Activated B cell treated with CpG ODN at 0.5 μM for 24 hours (primary cell): ENCODE measurements at regions of chr1 and their contacts with region 1.

Region 1: DNA sequence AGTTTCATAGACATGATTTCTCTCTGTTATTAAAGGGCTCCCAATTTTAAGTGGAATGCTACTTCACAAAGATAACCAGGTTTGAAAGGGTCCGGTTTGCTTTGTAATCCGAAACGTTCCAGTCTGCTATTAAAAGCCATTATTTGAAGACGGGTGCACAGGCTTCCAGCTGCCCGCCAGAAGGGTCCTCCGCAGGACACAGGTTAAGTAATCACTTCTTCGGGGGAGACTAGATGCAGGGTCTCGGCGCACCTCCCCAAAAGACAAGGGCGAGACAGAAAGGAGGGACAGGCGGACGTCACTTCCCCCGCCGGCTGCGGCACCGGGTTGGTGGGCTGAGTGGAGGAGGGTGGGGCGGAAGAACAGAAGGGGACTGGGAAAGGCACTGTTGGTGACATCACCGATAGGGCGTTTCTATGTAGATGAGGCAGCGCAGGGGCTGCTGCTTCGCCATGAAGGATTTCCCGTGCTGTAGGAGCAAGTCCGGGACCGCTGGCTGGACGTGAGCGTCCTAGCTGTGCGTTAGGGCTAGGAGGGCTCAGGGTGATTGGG is 8.9 kb downstream of the RNU1-2 start:
- DNase-seq: peak; percentile 86
- ATAC-seq: peak; percentile 90
- H3K4me3 Mint-ChIP-seq: no peak overlapping the region
- H3K27ac Mint-ChIP-seq: no peak overlapping the region
- H3K4me1 Mint-ChIP-seq: peaks cover 40% of the 10 kb centered on the region
- H3K27me3 Mint-ChIP-seq: no peaks in the 10 kb centered on the region
- CTCF ChIP-seq: no peak

Region 2: GRCh38 chr1:16888860-16889816 is 15.5 kb before region 1 on chr1:
- CTCF ChIA-PET with region 1: no interaction called
- POLR2A ChIA-PET with region 1: interaction called, 35 read pairs
- intact Hi-C with region 1: no loop called
- DNase-seq: peak; percentile 57
- ATAC-seq: peak; percentile 73
- H3K4me3 Mint-ChIP-seq: peak overlapping the region; percentile 93
- H3K27ac Mint-ChIP-seq: peak overlapping the region; percentile 93
- H3K4me1 Mint-ChIP-seq: peaks cover 19% of the 10 kb centered on the region
- H3K27me3 Mint-ChIP-seq: no peaks in the 10 kb centered on the region
- CTCF ChIP-seq: no peak

Region 3: GRCh38 chr1:16927711-16928485 is 23.3 kb after region 1 on chr1:
- CTCF ChIA-PET with region 1: no interaction called
- POLR2A ChIA-PET with region 1: no interaction called
- intact Hi-C with region 1: no loop called
- DNase-seq: no peak
- ATAC-seq: no peak
- H3K4me3 Mint-ChIP-seq: no peak overlapping the region
- H3K27ac Mint-ChIP-seq: no peak overlapping the region
- H3K4me1 Mint-ChIP-seq: no peaks in the 10 kb centered on the region
- H3K27me3 Mint-ChIP-seq: no peaks in the 10 kb centered on the region
- CTCF ChIP-seq: no peak